Panc1 (cell line): ENCODE measurements at regions of chr1 and their contacts with region 1.

Region 1: DNA sequence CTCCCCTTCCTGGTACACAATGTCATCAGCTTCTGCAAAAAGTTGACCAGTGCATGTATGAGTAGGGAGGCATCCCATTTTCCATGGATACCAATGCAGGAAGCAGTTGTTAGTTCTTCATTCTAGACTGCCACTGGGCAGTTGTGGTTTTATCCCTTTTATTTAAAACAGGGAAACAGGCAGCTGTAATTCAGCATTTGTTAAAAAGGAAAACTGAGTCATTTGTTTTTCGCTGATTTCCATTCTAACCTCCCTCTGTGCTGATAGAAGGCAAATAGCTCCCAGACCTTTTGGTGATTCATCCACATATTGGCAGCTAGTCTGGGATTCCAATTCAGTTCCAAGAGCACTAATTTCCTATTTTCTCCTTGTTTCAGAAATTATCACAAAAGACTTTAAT is 21.1 kb upstream of the ABCA4 start:
- DNase-seq: no peak
- ATAC-seq: no peak
- H3K4me3 ChIP-seq: no peak overlapping the region
- H3K27ac ChIP-seq: no peak overlapping the region
- H3K4me1 ChIP-seq: peaks cover 7% of the 10 kb centered on the region
- H3K27me3 ChIP-seq: no peaks in the 10 kb centered on the region
- CTCF ChIP-seq: no peak

Region 2: GRCh38 chr1:94079080-94079940 is 62.7 kb before region 1 on chr1:
- CTCF ChIA-PET with region 1: no interaction called
- POLR2A ChIA-PET with region 1: no interaction called
- in situ Hi-C with region 1: loop called (anchors 10 kb)
- intact Hi-C with region 1: no loop called
- DNase-seq: no peak
- ATAC-seq: no peak
- H3K4me3 ChIP-seq: no peak overlapping the region
- H3K27ac ChIP-seq: peak overlapping the region; percentile 63; the same call in 1 of the 2 replicates
- H3K4me1 ChIP-seq: no peaks in the 10 kb centered on the region; the same call in 1 of the 2 replicates
- H3K27me3 ChIP-seq: no peaks in the 10 kb centered on the region
- CTCF ChIP-seq: no peak

Region 3: GRCh38 chr1:94160811-94161210 is 18.8 kb after region 1 on chr1:
- CTCF ChIA-PET with region 1: no interaction called
- POLR2A ChIA-PET with region 1: no interaction called
- in situ Hi-C with region 1: no loop called
- intact Hi-C with region 1: no loop called
- DNase-seq: no peak
- ATAC-seq: no peak; the same call in 1 of the 2 replicates
- H3K4me3 ChIP-seq: no peak overlapping the region
- H3K27ac ChIP-seq: peak overlapping the region; percentile 58
- H3K4me1 ChIP-seq: peaks cover 3% of the 10 kb centered on the region
- H3K27me3 ChIP-seq: no peaks in the 10 kb centered on the region
- CTCF ChIP-seq: no peak

Region 4: GRCh38 chr1:94199398-94199797 is 57.4 kb after region 1 on chr1:
- CTCF ChIA-PET with region 1: no interaction called
- POLR2A ChIA-PET with region 1: no interaction called
- in situ Hi-C with region 1: no loop called
- intact Hi-C with region 1: no loop called
- DNase-seq: no peak
- ATAC-seq: 0 out of 2 replicates have a peak, but pooled peaks have one; percentile 25
- H3K4me3 ChIP-seq: no peak overlapping the region
- H3K27ac ChIP-seq: peak overlapping the region; percentile 62
- H3K4me1 ChIP-seq: peaks cover 74% of the 10 kb centered on the region
- H3K27me3 ChIP-seq: no peaks in the 10 kb centered on the region
- CTCF ChIP-seq: no peak